Endothelial cell of umbilical vein (primary cell): ENCODE measurements at regions of chr3 and their contacts with region 1.

Region 1: DNA sequence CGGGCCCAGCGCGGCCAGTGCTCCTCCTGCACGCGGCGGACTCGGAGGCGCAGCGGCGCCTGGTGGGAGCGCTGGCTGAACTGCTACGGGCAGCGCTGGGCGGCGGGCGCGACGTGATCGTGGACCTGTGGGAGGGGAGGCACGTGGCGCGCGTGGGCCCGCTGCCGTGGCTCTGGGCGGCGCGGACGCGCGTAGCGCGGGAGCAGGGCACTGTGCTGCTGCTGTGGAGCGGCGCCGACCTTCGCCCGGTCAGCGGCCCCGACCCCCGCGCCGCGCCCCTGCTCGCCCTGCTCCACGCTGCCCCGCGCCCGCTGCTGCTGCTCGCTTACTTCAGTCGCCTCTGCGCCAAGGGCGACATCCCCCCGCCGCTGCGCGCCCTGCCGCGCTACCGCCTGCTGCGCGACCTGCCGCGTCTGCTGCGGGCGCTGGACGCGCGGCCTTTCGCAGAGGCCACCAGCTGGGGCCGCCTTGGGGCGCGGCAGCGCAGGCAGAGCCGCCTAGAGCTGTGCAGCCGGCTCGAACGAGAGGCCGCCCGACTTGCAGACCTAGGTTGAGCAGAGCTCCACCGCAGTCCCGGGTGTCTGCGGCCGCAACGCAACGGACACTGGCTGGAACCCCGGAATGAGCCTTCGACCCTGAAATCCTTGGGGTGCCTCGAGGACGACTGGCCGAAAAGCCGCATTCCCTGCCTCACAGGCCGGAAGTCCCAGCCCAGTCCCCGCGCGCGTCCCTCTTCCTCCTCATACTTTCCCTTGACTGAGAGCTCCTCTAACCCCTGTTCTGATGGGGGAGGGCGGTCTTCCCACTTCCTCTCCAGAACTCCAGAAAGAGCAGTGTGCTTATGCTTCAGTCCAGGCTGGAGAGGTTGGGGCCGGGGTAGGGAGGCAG is 1.4 kb upstream of the IL17RC start:
- DNase-seq: peak; percentile 50
- H3K4me3 ChIP-seq: peak overlapping the region in 2 of 3 experiments; percentile 29 to 39
- H3K27ac ChIP-seq: no peak overlapping the region
- H3K4me1 ChIP-seq: peaks cover 13% of the 10 kb centered on the region
- H3K27me3 ChIP-seq: no peaks in the 10 kb centered on the region
- CTCF ChIP-seq: peak; percentile 32 to 57
- POLR2A ChIP-seq: peak; percentile 29

Region 2: DNA sequence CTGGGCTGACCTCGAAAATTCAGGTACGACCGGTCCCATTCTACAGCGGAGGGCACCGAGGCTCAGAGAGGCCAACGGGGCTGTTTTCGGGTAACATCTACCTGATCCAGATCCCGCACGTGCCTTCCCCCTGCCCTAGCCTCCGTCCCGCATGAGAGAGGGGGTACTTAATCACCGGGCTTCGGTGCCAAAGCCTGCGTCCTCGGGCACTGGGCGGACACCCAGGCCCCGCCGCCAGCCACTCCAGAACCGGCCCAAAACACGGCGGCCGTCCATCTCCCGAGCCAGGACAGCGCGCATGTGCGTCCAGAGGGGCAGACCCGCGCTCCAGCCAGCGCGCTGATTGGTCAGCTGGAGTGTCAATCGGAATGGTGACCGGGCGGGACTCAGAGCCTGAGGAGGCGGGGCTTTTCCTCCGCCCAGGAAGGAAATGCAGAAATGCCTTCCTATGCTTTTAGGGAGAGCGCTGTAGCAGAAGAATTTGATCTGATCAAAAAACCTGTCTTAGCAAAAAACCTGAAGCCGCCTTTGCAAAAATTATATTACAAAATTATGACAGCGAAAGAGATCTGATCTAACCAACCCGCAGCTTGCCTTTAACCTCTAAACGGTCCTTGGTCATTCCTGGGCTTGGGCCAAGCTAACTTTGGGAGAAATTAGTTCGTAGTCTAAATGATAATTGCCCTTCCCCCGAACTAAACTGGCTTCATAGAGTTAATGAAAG is 71.6 kb before region 1 on chr3 and contains the start of gene RPUSD3:
- CTCF ChIA-PET with region 1: interaction called, 5 read pairs
- POLR2A ChIA-PET with region 1: no interaction called
- dilution Hi-C with region 1: no loop called
- intact Hi-C with region 1: loop called (anchors 2 kb)
- DNase-seq: peak; percentile 96
- H3K4me3 ChIP-seq: peak within 1 kb of the TSS; percentile 64 to 80 (median 77)
- H3K27ac ChIP-seq: peak within 1 kb of the TSS; percentile 11
- H3K4me1 ChIP-seq: peaks cover 14% of the 10 kb centered on the region
- H3K27me3 ChIP-seq: no peaks in the 10 kb centered on the region
- CTCF ChIP-seq: no peak
- POLR2A ChIP-seq: peak; percentile 77
- total RNA-seq, gene RPUSD3: 34.8 and 38.9 TPM in 2 replicates

Region 3: GRCh38 chr3:9862391-9863057 is 53.0 kb before region 1 on chr3:
- CTCF ChIA-PET with region 1: interaction called, 4 read pairs
- POLR2A ChIA-PET with region 1: no interaction called
- dilution Hi-C with region 1: no loop called
- intact Hi-C with region 1: loop called (anchors 1 kb)
- DNase-seq: peak; percentile 29
- H3K4me3 ChIP-seq: peak overlapping the region in 1 of 3 experiments; percentile 27
- H3K27ac ChIP-seq: no peak overlapping the region
- H3K4me1 ChIP-seq: no peaks in the 10 kb centered on the region
- H3K27me3 ChIP-seq: no peaks in the 10 kb centered on the region
- CTCF ChIP-seq: peak; percentile 30 to 62
- POLR2A ChIP-seq: no peak

Region 4: DNA sequence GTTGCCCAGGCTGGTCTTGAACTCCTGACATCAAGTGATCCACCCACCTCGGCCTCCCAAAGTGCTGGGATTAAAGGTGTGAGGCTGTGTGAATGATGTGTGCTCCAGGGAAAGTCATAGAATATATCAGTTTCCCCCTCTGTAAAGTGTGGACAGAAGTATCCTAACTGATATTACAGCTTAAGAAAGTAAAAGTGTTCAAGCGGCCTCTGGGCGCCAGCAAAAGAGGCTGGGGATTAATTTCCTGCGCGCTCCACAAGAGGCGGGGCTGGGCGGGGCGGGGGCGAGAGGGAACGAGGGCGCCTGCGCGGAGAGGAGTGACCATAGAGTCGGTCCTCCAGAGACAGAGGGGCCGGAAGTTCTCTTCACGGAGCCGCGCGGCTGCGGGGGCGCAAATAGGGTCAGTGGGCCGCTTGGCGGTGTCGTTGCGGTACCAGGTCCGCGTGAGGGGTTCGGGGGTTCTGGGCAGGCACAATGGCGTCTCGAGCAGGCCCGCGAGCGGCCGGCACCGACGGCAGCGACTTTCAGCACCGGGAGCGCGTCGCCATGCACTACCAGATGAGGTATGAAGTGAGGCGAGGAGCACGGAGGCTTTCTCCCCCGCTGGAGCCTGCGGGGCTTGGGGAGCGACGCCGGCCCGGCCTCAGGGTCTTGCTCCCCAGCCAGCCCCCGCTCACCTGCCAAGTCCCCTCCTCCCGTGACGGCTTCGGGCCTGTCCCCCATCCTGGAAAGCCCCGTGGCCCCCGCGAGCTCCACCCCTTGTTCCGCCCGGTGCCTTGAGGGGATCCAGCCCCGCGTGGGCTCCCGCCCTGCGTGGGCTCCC is 25.0 kb before region 1 on chr3 and contains the start of gene JAGN1:
- CTCF ChIA-PET with region 1: interaction called, 5 read pairs
- POLR2A ChIA-PET with region 1: interaction called, 4 read pairs
- dilution Hi-C with region 1: no loop called
- intact Hi-C with region 1: loop called (anchors 1 kb)
- DNase-seq: peak; percentile 92
- H3K4me3 ChIP-seq: peak within 1 kb of the TSS; percentile 82 to 92 (median 89)
- H3K27ac ChIP-seq: peak within 1 kb of the TSS; percentile 76
- H3K4me1 ChIP-seq: peaks cover 25% of the 10 kb centered on the region
- H3K27me3 ChIP-seq: no peaks in the 10 kb centered on the region
- CTCF ChIP-seq: no peak
- POLR2A ChIP-seq: peak; percentile 95
- total RNA-seq, gene JAGN1: 29.6 and 31.4 TPM in 2 replicates

Region 5: DNA sequence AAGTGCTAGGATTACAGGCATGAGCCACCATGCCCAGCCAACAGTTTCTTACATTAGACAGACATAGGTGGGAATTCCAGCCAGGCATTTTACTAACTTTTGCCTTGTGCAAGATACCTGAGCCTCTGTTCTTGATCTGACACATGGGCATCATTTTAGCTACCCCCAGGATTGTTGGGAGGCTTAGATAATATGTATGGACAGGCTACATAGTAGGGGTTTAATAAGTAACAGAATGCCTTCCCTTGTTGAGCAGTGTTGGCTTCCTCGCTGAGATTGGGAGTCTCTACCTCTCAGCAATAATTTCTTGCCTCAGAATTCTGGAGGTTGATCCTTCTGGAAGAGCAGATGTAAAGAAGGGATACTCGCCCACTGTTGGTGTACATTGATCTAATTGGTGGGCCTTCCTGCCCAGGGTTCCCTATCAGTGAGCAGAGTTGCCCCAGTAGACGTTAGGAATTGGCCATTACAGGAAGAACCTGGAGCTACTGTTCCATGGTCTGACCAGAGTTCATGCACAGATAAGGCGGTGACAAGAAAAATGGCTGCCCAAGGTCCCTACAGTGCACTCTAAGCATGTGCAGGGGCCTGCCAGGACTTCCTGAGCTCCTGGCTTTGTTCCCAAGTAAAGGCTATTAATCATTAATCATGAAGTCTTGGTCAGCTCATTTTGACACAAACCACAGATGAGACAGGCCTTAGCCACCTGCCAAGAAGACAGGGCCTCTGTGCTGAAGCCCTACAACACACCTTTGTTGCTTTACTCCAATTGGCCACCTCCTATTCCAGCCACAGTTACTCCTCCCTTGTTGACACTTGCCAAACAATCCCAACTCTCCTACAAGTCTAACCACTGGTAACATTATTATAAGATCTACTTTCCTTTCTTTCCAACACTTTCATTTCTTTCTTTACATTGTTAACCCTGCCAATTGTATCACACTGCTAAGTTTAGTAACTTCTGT is 17.8 kb before region 1 on chr3:
- CTCF ChIA-PET with region 1: interaction called, 5 read pairs
- POLR2A ChIA-PET with region 1: interaction called, 4 read pairs
- dilution Hi-C with region 1: no loop called
- intact Hi-C with region 1: loop called (anchors 1 kb)
- DNase-seq: peak; percentile 75
- H3K4me3 ChIP-seq: no peak overlapping the region
- H3K27ac ChIP-seq: no peak overlapping the region
- H3K4me1 ChIP-seq: peaks cover 42% of the 10 kb centered on the region
- H3K27me3 ChIP-seq: no peaks in the 10 kb centered on the region
- CTCF ChIP-seq: no peak
- POLR2A ChIP-seq: peak; percentile 29

Region 6: GRCh38 chr3:11910971-11911531 is 1995.6 kb after region 1 on chr3:
- CTCF ChIA-PET with region 1: no interaction called
- POLR2A ChIA-PET with region 1: no interaction called
- dilution Hi-C with region 1: no loop called
- intact Hi-C with region 1: no loop called
- DNase-seq: no peak
- H3K4me3 ChIP-seq: peak overlapping the region in 1 of 3 experiments; percentile 19
- H3K27ac ChIP-seq: no peak overlapping the region
- H3K4me1 ChIP-seq: no peaks in the 10 kb centered on the region
- H3K27me3 ChIP-seq: no peaks in the 10 kb centered on the region
- CTCF ChIP-seq: no peak
- POLR2A ChIP-seq: no peak